ENCODE measurements at regions of chr10 and their contacts with region 1.

Region 1: DNA sequence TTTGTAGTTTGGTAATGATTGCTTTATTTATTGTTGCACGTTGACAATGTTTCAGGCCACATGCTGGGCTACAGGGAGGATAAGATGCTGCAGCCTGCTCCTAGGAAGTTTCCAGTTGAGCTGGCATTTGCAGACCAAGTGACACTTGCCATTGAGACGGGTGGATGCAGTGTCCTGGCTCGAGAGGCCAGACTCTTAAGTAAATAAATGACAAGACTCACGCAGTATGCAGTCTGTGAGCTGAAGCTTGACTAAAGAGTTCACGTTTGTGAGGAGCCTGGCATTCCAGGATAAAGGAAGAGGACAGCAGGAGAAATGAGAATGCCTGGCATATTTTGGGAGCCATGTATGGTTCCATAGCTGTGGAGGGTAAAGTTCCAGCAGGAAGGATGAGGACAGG is 105.8 kb downstream of the BAMBI start:
- DNase-seq: no peak
- H3K4me3 ChIP-seq: no peak overlapping the region
- H3K27ac ChIP-seq: no peak overlapping the region
- H3K27me3 ChIP-seq: no peaks in the 10 kb centered on the region
- CTCF ChIP-seq: no peak

Region 2: DNA sequence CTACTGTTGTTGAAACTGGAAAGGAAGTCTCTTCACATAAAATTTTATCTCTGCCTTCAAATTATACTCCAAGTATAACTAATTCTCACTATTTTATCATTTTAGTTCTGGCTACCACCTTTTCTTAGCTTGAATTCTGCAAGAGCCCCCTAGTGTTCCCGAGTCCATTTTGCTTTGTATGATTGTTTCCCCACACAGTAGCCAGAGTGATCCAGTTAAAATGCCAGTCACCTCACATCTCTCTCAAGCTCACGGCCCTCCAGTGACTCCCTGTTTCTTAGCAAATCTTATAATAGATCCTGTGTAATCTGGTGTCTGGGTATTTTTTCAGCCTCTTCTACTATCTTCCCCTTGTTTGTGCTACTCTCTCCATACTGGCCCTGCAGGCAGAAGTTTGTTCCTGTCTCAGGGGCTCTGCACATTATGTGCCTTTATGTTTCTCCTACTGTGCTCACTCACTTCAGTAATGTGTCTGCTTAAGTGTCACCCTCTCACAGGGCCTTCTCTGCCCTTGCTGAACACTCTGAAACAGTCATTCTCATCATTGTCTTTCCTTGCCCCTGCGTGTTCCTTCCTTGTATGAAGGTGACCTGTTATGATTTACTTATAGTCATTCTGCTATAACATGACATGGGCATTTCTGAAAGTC is 241.2 kb before region 1 on chr10:
- intact Hi-C with region 1: no loop called
- DNase-seq: no peak
- H3K4me3 ChIP-seq: peak overlapping the region in 3 of 59 donors; percentile 5 to 33 (median 8)
- H3K27ac ChIP-seq: peak overlapping the region in 4 of 59 donors; percentile 15 to 50 (median 28)
- H3K27me3 ChIP-seq: no peaks in the 10 kb centered on the region
- CTCF ChIP-seq: peak in 11 of 56 donors; percentile 6 to 26 (median 16)

Region 3: DNA sequence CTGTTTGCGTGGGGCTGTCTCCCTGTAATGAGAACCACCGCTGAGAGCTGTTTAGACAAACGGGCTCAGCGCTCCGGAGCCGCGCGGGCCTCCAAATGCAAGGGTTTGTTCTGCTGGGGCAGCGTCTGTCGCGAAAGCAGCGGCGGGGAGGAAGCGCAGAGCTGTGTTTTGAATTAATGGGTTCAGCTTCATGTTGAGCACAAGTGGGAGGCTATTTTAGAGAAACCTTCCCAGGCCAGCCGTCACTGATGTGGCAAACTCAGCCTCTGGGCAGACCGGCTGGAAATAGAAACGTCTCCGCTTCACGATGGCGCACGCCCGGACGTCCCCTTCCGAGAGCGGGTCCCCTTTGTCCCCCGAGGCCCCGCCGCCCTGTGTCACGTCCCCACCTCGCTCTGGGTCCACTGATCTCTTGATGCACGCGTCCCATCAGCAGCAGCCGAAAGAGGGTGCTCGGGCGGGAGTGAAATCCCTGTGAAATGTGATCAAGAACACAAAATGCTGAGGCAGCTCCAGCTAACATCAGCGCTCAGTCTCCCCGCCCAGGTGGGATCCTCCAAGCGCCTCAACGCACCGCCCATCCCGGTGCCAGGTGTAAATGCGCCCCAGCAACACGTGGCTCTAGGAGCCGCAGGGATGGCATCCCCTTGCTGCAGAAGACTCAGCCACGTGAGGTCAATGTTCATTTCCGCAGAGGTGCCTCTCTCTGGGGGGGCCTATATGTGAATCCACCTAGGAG is 60.9 kb before region 1 on chr10:
- intact Hi-C with region 1: loop called in 1 of 2 experiments (anchors 5 kb)
- DNase-seq: peak; percentile 10 to 70 (median 57)
- H3K4me3 ChIP-seq: peak overlapping the region; percentile 42 to 81 (median 65)
- H3K27ac ChIP-seq: peak overlapping the region in 30 of 59 donors; percentile 3 to 78 (median 46)
- H3K27me3 ChIP-seq: peaks cover 0 to 5% (median 0%) of the 10 kb centered on the region in 45 donors
- CTCF ChIP-seq: peak in 6 of 56 donors; percentile 12 to 29 (median 18)